BJ (cell line): ENCODE measurements at regions of chr12 and their contacts with region 1.

Region 1: GRCh38 chr12:26701604-26702215 is 131.3 kb downstream of the ITPR2 start:
- DNase-seq: no peak
- H3K4me3 ChIP-seq: no peak overlapping the region
- H3K27me3 ChIP-seq: no peaks in the 10 kb centered on the region
- CTCF ChIP-seq: peak; percentile 54

Region 2: DNA sequence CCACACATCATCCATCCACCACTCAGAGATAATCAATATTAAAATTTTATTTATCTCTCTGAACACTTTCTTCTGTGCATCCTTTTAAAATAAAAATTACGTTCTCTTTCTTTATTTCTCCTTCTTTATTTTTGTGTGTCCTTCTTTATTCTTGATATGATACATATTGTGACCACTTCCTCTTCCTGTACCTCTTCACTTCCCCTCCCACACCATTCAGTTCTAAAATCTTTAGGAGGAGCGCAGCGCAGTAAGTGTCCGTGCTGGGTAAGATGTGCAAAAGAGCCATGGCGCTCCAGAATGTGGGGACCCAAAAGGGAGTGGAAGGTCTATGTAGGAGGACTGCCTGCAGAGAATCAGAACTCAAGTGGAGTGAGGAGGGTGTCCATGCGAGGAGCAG is 125.4 kb before region 1 on chr12:
- CTCF ChIA-PET with region 1: no interaction called
- POLR2A ChIA-PET with region 1: no interaction called
- DNase-seq: no peak
- H3K4me3 ChIP-seq: no peak overlapping the region
- H3K27me3 ChIP-seq: no peaks in the 10 kb centered on the region
- CTCF ChIP-seq: no peak

Region 3: GRCh38 chr12:26629864-26630263 is 71.8 kb before region 1 on chr12:
- CTCF ChIA-PET with region 1: interaction called, 17 read pairs
- POLR2A ChIA-PET with region 1: no interaction called
- DNase-seq: no peak
- H3K4me3 ChIP-seq: no peak overlapping the region
- H3K27me3 ChIP-seq: no peaks in the 10 kb centered on the region
- CTCF ChIP-seq: peak; percentile 54